Heart right ventricle (tissue), 16 donors: ENCODE measurements at regions of chr1 and their contacts with region 1.

Region 1: DNA sequence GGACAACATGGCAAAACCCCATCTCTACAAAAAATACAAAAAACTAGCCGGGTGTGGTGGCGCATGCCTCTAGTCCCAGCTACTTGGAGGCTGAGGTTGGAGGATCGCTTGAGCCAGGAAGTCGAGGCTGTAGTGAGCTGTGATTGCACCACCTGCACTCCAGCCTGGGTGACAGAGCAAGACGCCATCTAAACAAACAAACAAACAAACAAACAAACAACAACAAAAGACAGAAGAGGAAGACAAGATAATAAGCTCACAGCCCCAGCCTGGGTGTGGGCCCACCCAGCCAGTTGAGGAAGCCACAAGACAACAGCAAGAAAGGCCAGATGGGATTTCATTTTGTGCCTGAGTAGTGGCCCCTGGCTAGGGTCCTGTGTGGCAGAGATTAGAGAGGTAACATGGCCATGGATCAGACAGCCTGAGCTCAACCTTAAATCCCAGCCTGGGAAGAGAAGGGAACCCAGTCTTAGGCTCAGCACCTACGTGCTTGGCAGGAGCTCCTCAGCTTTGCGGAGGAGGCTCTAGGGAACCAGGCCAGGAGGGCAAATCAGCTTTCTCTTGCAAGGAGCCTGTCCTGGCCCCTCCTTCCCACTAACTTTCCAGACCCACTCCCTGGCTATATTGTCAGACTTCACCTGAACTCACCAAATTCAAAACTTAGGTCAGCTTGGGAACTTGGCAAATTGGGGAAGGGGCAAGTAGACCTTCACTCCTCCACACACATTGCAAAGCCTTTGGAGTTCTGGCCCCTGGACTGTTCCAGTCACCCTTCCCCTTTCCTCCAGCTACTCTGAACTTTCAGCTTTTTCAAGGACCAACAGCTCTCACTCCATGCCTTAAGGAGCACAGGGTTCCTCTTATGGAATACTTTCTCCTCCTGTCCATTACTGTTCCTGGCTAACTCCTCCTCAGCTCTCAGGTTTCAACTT is 5.1 kb upstream of the BEST4 start:
- DNase-seq: no peak
- ATAC-seq: peak in 3 of 8 donors; percentile 9 to 21 (median 14)
- H3K4me3 ChIP-seq: no peak overlapping the region
- H3K27ac ChIP-seq: no peak overlapping the region
- H3K4me1 ChIP-seq: no peaks in the 10 kb centered on the region
- H3K27me3 ChIP-seq: no peaks in the 10 kb centered on the region
- CTCF ChIP-seq: no peak

Region 2: DNA sequence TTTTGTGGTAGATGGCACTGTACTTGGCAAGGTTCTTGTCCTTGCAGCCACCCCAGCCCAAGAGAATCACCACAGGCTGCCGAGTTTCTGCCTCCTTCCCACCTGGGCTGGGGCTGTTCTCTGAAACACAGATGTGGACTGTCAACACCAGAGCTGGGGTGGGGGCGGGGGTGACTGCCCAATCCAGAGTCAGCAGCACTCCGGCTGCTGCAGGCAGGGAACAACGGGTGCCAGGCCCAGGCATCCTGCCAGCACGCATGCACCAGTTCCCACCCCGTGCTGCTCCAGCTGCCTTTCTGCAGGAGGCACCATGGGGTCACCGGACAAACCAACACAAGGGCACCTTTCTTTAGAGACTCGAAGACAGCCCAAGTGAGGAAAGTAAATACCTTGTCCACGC is 132.9 kb before region 1 on chr1:
- intact Hi-C with region 1: no loop called
- DNase-seq: peak; percentile 81 to 84
- ATAC-seq: peak; percentile 87 to 97 (median 92)
- H3K4me3 ChIP-seq: no peak overlapping the region
- H3K27ac ChIP-seq: peak overlapping the region in 6 of 10 donors; percentile 38 to 70 (median 62)
- H3K4me1 ChIP-seq: peaks cover 0 to 12% (median 5%) of the 10 kb centered on the region in 9 donors
- H3K27me3 ChIP-seq: no peaks in the 10 kb centered on the region
- CTCF ChIP-seq: no peak

Region 3: GRCh38 chr1:44826375-44827196 is 33.5 kb after region 1 on chr1:
- intact Hi-C with region 1: loop called in 6 of 10 experiments (anchors 2 to 10 kb)
- DNase-seq: peak; percentile 66 to 77
- ATAC-seq: peak; percentile 65 to 93 (median 85)
- H3K4me3 ChIP-seq: peak overlapping the region in 4 of 10 donors; percentile 17 to 37 (median 25)
- H3K27ac ChIP-seq: peak overlapping the region in 9 of 10 donors; percentile 39 to 79 (median 53)
- H3K4me1 ChIP-seq: peaks cover 0 to 29% (median 10%) of the 10 kb centered on the region in 9 donors
- H3K27me3 ChIP-seq: no peaks in the 10 kb centered on the region
- CTCF ChIP-seq: no peak

Region 4: DNA sequence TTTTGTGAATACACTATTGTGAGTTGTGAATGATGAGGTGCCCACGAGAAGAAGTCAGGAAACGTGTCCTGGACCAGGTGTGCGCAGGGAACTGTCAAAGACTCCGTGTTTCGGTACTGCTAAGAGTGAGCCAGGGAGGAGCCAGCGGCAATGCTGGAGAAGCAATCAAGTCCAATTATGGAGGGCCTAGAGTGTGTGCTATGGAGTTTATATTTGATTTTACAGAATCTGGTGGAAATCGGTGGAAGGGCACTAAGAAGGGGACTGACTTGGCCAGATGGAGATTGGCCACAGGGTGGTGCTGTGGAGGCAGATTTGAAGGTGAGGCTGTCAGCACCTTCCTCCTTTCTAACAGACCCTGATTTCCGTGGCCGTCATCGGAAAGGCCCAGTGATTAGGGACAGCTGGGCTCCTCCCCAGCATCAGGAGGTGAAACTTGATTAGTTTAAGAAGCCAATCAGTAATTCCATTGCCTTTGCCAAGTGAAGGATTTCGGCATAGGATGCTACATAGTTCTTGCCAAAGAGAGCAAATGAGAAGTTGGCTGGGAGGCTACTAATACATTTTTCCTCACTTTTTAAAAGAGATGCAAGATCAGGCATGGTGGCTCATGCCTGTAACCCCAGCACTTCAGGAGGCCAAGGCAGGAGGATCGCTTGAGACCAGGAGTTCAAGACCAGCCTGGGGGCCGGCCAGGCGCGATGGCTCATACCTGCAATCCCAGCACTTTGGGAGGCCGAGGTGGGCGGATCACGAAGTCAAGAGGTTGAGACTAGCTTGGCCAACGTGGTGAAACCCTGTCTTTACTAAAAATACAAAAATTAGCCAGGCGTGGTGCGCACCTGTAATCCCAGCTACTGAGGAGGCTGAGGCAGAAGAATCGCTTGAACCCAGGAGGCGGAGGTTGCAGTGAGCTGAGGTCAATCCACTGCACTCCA is 43.0 kb after region 1 on chr1:
- intact Hi-C with region 1: loop called in 7 of 10 experiments (anchors 2 to 10 kb)
- DNase-seq: peak; percentile 85 to 87
- ATAC-seq: peak; percentile 78 to 89 (median 84)
- H3K4me3 ChIP-seq: no peak overlapping the region
- H3K27ac ChIP-seq: peak overlapping the region in 1 of 10 donors; percentile 8
- H3K4me1 ChIP-seq: peaks cover 0 to 19% (median 0%) of the 10 kb centered on the region in 9 donors
- H3K27me3 ChIP-seq: no peaks in the 10 kb centered on the region
- CTCF ChIP-seq: peak; percentile 74 to 96 (median 86)